Activated B cell treated with CpG ODN at 0.5 μM for 24 hours (primary cell): ENCODE measurements at regions of chr11 and their contacts with region 1.

Region 1: GRCh38 chr11:119222308-119222707 is 16.2 kb downstream of the CBL start:
- DNase-seq: no peak
- ATAC-seq: no peak
- H3K4me3 Mint-ChIP-seq: no peak overlapping the region
- H3K27ac Mint-ChIP-seq: peak overlapping the region; percentile 16
- H3K4me1 Mint-ChIP-seq: peaks cover 38% of the 10 kb centered on the region
- H3K27me3 Mint-ChIP-seq: no peaks in the 10 kb centered on the region
- CTCF ChIP-seq: no peak

Region 2: GRCh38 chr11:119205574-119206510 is 16.5 kb before region 1 on chr11 and contains the start of gene CBL:
- CTCF ChIA-PET with region 1: no interaction called
- POLR2A ChIA-PET with region 1: interaction called, 3 read pairs
- intact Hi-C with region 1: loop called (anchors 2 kb)
- DNase-seq: peak; percentile 95
- ATAC-seq: peak; percentile 86
- H3K4me3 Mint-ChIP-seq: peak within 1 kb of the TSS; percentile 96
- H3K27ac Mint-ChIP-seq: peak within 1 kb of the TSS; percentile 90
- H3K4me1 Mint-ChIP-seq: peaks cover 31% of the 10 kb centered on the region
- H3K27me3 Mint-ChIP-seq: no peaks in the 10 kb centered on the region
- CTCF ChIP-seq: no peak
- total RNA-seq, gene CBL: 26.2 and 27.8 TPM in 2 replicates

Region 3: GRCh38 chr11:119236490-119236889 is 14.2 kb after region 1 on chr11:
- CTCF ChIA-PET with region 1: no interaction called
- POLR2A ChIA-PET with region 1: no interaction called
- intact Hi-C with region 1: no loop called
- DNase-seq: no peak
- ATAC-seq: no peak
- H3K4me3 Mint-ChIP-seq: no peak overlapping the region
- H3K27ac Mint-ChIP-seq: peak overlapping the region; percentile 13
- H3K4me1 Mint-ChIP-seq: peaks cover 24% of the 10 kb centered on the region
- H3K27me3 Mint-ChIP-seq: no peaks in the 10 kb centered on the region
- CTCF ChIP-seq: no peak

Region 4: DNA sequence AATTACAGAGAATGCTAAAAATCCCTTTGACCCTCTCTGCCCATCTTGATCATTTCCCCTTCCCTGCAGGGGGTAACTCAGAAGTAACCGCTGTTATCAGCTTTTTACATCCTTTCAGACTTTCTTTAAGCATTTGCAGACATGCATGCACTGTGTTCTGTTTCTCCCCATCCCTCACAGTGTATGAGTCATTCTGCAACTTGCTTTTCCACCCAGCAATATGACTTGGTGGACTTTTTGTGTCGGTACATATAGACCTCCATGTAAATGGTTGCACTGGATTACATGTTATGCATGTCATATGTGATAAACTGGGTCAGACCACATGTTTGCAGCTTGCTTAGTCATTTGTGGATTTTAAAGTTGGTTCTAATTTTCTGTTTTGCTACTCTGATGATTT is 594.4 kb after region 1 on chr11:
- CTCF ChIA-PET with region 1: no interaction called
- POLR2A ChIA-PET with region 1: no interaction called
- intact Hi-C with region 1: no loop called
- DNase-seq: no peak
- ATAC-seq: no peak
- H3K4me3 Mint-ChIP-seq: no peak overlapping the region
- H3K27ac Mint-ChIP-seq: no peak overlapping the region
- H3K4me1 Mint-ChIP-seq: no peaks in the 10 kb centered on the region
- H3K27me3 Mint-ChIP-seq: peaks cover 16% of the 10 kb centered on the region
- CTCF ChIP-seq: no peak